Transverse colon (tissue), 4 donors: ENCODE measurements at regions of chr19 and their contacts with region 1.

Region 1: GRCh38 chr19:15264061-15264932 is 32.0 kb upstream of the EPHX3 start:
- DNase-seq: peak; percentile 78
- H3K4me3 ChIP-seq: no peak overlapping the region
- H3K27ac ChIP-seq: peak overlapping the region; percentile 65 to 88 (median 72)
- H3K4me1 ChIP-seq: peaks cover 23 to 58% (median 40%) of the 10 kb centered on the region in 4 donors
- H3K27me3 ChIP-seq: no peaks in the 10 kb centered on the region
- CTCF ChIP-seq: peak; percentile 73 to 85 (median 78)
- EP300 ChIP-seq: no peak
- POLR2A ChIP-seq: no peak

Region 2: GRCh38 chr19:15008308-15008707 is 256.0 kb before region 1 on chr19:
- in situ Hi-C with region 1: no loop called
- intact Hi-C with region 1: no loop called
- DNase-seq: no peak
- H3K4me3 ChIP-seq: no peak overlapping the region
- H3K27ac ChIP-seq: no peak overlapping the region
- H3K4me1 ChIP-seq: no peaks in the 10 kb centered on the region
- H3K27me3 ChIP-seq: peaks cover 43% of the 10 kb centered on the region
- CTCF ChIP-seq: no peak
- EP300 ChIP-seq: no peak
- POLR2A ChIP-seq: no peak

Region 3: GRCh38 chr19:15091901-15092753 is 172.2 kb before region 1 on chr19:
- in situ Hi-C with region 1: no loop called
- intact Hi-C with region 1: no loop called
- DNase-seq: no peak
- H3K4me3 ChIP-seq: no peak overlapping the region
- H3K27ac ChIP-seq: no peak overlapping the region
- H3K4me1 ChIP-seq: peaks cover 0 to 7% (median 2%) of the 10 kb centered on the region in 4 donors
- H3K27me3 ChIP-seq: no peaks in the 10 kb centered on the region
- CTCF ChIP-seq: peak; percentile 58 to 72 (median 65)
- EP300 ChIP-seq: no peak
- POLR2A ChIP-seq: no peak

Region 4: DNA sequence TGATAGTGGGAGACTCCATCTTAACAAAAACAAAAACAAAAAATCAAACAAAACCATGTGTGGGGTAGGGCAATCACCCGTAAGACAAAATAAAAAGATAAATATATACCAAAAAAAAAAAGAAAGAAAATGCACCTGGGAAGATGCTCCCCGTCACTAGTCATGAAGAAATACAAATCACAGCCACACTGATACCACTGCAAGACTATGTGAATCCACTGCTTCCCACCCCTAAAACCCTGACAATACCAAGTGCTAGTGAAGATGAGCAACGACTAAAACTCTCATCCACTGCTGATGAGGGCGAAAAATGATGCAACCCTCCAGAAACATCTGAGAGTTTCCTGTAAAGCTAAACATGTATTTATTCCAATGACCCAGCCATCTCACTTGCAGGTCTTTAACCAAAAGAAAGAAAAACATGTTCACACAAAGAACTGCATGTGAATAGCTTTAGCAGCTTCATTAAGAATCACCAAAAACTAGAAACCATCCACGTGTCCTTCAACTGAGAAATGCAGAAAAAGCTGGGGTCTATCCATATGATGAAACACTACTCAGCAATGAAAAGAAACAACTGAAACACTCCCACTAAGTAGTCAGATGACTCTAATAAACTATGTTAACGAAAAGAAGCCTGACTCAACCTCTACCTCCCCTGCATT is 36.4 kb after region 1 on chr19:
- in situ Hi-C with region 1: no loop called
- intact Hi-C with region 1: loop called (anchors 2 kb)
- DNase-seq: no peak
- H3K4me3 ChIP-seq: no peak overlapping the region
- H3K27ac ChIP-seq: peak overlapping the region in 1 of 4 donors; percentile 31
- H3K4me1 ChIP-seq: peaks cover 48 to 97% (median 79%) of the 10 kb centered on the region in 4 donors
- H3K27me3 ChIP-seq: no peaks in the 10 kb centered on the region
- CTCF ChIP-seq: no peak
- EP300 ChIP-seq: no peak
- POLR2A ChIP-seq: no peak

Region 5: DNA sequence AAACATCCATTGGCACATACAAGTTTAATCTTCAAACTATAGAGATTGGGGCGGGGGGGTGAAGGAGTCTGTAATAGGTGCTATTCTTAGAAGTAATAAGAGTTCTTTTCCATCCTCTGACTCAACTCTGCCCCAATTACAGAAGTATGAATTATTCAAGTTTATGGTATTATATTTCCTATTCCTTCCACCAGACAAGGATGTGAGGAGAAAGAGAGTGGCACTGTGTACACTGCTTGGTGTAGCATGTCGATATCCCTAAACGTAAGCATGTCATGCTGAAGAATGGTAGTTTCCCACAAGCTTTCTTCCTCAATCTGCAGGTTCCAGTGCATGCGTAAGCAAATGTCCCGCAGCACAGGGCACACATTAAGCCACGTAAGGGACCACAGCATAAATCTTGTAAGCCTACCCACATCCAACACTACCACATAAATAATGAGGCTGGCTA is 54.0 kb after region 1 on chr19:
- in situ Hi-C with region 1: no loop called
- intact Hi-C with region 1: no loop called
- DNase-seq: no peak
- H3K4me3 ChIP-seq: no peak overlapping the region
- H3K27ac ChIP-seq: peak overlapping the region; percentile 12 to 44 (median 30)
- H3K4me1 ChIP-seq: peaks cover 48 to 92% (median 60%) of the 10 kb centered on the region in 4 donors
- H3K27me3 ChIP-seq: no peaks in the 10 kb centered on the region
- CTCF ChIP-seq: no peak
- EP300 ChIP-seq: no peak
- POLR2A ChIP-seq: no peak

Region 6: DNA sequence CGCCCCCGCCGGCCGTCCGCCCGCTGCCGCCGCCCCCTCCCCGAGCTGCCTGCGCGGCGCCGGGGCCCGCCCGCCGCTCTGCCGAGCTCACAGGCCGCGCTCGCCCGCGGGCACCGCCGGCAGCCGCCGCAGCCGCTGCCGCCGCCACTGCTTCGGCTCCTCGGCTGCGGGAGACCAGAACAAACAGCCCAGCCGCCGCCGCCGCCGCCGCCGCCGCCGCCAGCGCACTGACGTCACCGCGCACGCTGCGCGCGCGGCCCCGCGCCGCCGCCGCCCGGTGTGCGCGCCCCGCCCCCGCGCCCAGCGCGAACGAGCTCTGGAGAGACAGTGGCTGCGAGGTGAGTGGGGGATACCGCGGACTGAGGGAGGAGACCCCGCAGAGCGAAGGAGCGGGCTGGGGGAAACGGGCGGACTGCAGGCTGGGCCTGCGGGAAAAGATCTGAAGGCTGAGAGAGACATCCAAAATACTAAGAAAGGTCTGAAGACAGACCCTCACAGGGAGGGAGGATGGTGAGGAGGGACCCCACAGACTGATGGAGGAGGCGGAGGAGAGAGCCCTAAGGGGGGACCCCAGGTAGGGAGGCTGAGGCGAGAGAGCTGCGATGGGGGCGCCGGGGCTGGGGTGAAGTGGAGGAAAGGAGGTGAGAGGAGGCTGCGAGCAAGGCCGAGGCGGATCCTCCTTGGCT is 68.2 kb after region 1 on chr19 and contains the start of gene BRD4:
- in situ Hi-C with region 1: no loop called
- intact Hi-C with region 1: loop called (anchors 5 kb)
- DNase-seq: peak; percentile 79
- H3K4me3 ChIP-seq: peak within 1 kb of the TSS; percentile 82 to 98 (median 91)
- H3K27ac ChIP-seq: peak within 1 kb of the TSS; percentile 89 to 94 (median 94)
- H3K4me1 ChIP-seq: peaks cover 17 to 49% (median 33%) of the 10 kb centered on the region in 4 donors
- H3K27me3 ChIP-seq: no peaks in the 10 kb centered on the region
- CTCF ChIP-seq: no peak
- EP300 ChIP-seq: no peak
- POLR2A ChIP-seq: no peak
- total RNA-seq, gene BRD4: 39.5 to 87.9 (median 61.2) TPM

Region 7: DNA sequence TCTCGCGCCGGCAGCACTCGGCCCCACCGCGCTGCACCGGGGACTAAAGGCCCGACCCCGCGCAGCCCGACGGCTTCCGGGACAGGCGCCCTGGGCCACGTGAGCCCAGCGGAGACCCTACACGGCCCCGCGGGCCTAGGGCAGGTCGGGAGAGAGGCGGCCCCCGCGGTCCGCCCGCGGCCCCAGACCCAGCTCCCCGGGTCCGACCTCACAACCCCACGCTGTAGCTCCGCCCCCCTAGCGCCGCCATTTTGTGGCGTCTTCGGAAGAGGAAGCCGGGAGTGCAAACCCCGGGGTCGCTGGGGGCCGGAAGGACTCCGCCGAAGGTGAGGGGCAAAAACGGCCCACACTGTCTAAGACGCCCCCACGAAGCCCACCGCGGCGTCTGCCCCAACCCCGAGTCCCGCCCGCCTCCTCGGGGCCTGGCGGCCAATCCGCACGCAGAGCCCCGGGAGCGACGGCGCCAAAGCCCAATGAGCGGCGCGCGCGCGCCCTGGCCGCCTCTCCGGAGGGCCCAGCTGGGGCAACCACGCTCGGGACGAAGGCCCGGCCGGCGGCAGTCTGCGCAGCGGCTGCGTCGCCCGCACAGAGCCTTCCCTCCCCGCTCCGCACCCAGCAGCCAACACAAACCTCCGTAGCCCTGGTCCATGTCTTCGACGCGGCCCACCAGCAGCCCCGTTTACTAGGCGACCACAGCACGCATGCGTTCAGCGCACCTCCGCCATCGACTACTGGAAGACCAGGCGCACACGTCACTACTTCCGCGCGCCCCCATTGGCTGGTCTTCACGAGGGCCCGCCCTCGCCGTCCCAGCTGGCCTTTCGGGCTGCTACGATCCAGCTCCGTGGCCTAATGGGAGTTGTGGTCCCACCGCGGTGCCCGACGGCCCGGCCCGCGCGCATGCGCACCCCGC is 115.0 kb after region 1 on chr19 and contains the start of gene AKAP8:
- in situ Hi-C with region 1: no loop called
- intact Hi-C with region 1: loop called (anchors 5 kb)
- DNase-seq: peak; percentile 99
- H3K4me3 ChIP-seq: peak within 1 kb of the TSS; percentile 76 to 95 (median 85)
- H3K27ac ChIP-seq: peak within 1 kb of the TSS; percentile 94 to 98 (median 98)
- H3K4me1 ChIP-seq: peaks cover 21 to 44% (median 31%) of the 10 kb centered on the region in 4 donors
- H3K27me3 ChIP-seq: no peaks in the 10 kb centered on the region
- CTCF ChIP-seq: no peak
- EP300 ChIP-seq: no peak
- POLR2A ChIP-seq: peak; percentile 83
- total RNA-seq, gene AKAP8: 21.6 to 75.2 (median 47.5) TPM

Region 8: GRCh38 chr19:15432629-15433518 is 168.6 kb after region 1 on chr19:
- in situ Hi-C with region 1: loop called in 1 of 4 experiments (anchors 25 kb)
- intact Hi-C with region 1: no loop called
- DNase-seq: peak; percentile 94
- H3K4me3 ChIP-seq: peak overlapping the region; percentile 72 to 90 (median 84)
- H3K27ac ChIP-seq: peak overlapping the region; percentile 89 to 99 (median 96)
- H3K4me1 ChIP-seq: peaks cover 16 to 33% (median 24%) of the 10 kb centered on the region in 4 donors
- H3K27me3 ChIP-seq: no peaks in the 10 kb centered on the region
- CTCF ChIP-seq: no peak
- EP300 ChIP-seq: no peak
- POLR2A ChIP-seq: no peak

Region 9: DNA sequence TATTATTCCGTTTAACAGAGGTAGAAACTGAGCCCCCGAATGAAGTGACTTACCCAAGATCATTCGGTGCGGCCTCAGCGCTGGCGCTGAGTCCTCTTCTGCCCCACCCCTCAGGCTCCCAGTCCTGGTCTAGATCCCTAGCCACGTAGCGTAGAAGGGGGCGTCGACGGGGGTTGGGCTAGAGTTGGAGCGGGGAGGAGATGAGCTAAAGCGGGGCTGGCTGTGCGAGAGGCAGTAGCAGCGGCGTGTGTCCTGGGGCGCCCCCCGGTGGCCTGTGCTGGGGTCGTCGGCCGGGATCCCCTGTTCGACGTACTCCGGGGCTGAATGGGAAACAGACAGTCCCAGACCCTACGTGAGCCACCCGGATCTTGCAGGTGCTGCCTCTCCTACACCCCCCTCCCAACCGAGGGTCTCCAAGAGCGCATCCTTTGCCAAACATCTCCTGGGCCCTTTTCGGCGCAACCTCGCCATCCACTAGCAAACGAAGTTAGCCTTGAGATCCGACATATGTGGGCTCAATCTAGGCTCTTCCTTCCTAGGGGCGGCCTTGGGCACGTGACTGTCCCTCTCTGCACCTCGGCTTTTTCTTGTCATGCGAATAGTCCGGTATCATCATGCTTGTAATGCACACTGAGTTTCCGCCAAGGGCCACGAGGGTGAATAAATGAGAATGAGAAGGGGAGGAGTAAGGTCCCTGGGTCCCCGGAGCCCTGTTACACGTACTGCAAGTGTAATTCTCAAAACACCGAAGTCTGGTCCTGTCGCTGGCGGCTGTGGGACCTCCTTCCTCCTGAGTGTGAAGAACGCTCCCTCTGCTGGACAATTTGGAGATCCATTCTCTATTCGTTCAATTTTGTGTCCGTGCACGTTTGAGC is 291.7 kb after region 1 on chr19:
- in situ Hi-C with region 1: loop called in 1 of 4 experiments (anchors 10 kb)
- intact Hi-C with region 1: no loop called
- DNase-seq: peak; percentile 91
- H3K4me3 ChIP-seq: peak overlapping the region in 2 of 4 donors; percentile 29 to 34
- H3K27ac ChIP-seq: peak overlapping the region in 3 of 4 donors; percentile 7 to 63 (median 10)
- H3K4me1 ChIP-seq: peaks cover 3 to 16% (median 13%) of the 10 kb centered on the region in 4 donors
- H3K27me3 ChIP-seq: peaks cover 29% of the 10 kb centered on the region
- CTCF ChIP-seq: peak; percentile 71 to 83 (median 76)
- EP300 ChIP-seq: no peak
- POLR2A ChIP-seq: no peak